Cardiac septum (tissue), 1 donor: ENCODE measurements at regions of chr10 and their contacts with region 1.

Region 1: GRCh38 chr10:100046021-100046486 is 35.6 kb downstream of the CPN1 start:
- DNase-seq: peak; percentile 92

Region 2: DNA sequence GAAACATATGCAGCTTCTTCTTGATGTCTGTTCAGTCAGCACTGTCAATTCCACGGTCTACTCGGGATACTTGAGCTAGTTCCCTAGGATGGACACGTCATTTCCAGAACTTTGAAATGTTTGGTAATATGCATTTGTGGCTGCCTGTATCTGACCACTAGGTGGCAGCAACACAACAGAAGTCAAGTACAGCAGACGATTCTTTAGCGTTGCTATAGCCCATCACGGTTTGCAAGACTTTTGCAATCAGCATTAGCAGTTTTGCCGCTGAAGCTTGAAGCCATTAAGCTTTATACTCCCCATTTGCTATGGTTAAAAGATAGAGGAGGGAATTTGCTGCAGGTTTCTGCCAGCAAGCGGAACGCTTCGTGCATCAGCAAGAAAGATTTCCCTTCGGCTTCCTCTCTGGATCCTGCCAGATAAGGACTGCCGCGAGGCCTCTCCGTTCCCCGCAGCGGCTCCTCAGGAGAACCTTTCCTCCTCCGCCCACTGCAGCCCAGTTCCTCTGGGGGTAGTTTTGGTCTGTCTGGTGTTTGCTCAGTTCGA is 200.1 kb before region 1 on chr10:
- intact Hi-C with region 1: loop called (anchors 2 kb)
- DNase-seq: no peak

Region 3: DNA sequence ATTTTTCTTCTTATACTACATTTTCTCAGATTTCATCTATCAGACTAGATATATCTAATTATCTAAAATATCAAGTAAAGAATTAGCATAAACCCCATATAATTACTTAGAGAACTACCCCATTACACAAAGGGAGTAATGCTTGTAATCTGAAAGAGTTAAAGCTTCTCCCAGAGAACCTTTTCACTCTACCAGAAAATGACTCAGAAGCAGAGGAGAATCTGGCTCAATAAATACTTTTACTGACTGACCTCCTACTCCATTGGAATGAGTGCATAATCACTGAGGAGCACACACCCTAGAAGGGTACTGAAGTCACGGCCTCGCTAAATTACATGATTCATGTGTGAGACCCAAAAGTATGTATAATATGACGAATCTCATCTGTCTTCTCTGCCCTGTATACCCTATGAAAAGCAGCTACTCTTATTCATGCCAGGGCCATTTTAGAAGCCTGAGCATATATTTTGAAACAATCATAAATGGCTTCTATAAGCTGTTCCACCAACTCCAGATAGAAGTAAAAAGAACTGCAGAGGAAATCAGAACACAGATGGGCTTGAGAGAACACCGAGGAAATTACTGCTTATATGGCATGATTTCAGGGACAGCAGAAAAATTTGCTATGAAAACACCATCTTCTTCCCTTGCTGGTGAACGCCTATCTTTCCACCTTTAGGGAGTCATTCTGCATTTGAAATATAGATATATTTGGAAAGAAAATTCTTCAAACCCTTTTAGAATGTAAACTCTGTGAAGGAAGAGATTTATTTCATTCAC is 69.0 kb before region 1 on chr10:
- intact Hi-C with region 1: no loop called
- DNase-seq: no peak

Region 4: GRCh38 chr10:100827819-100828737 is 782.0 kb after region 1 on chr10:
- intact Hi-C with region 1: no loop called
- DNase-seq: peak; percentile 71